ENCODE measurements at regions of chr22 and their contacts with region 1.

Region 1: GRCh38 chr22:31211862-31212730 is at the start of gene LIMK2:
- DNase-seq: peak; percentile 92 to 99 (median 97)
- ATAC-seq: peak; percentile 99
- H3K4me3 ChIP-seq: peak within 1 kb of the TSS; percentile 100
- H3K4me3 Mint-ChIP-seq: peak within 1 kb of the TSS; percentile 94
- H3K27ac ChIP-seq: peak within 1 kb of the TSS; percentile 55 to 72
- H3K27ac Mint-ChIP-seq: peak within 1 kb of the TSS; percentile 75
- H3K4me1 ChIP-seq: peaks cover 45% of the 10 kb centered on the region
- H3K4me1 Mint-ChIP-seq: peaks cover 62% of the 10 kb centered on the region
- H3K27me3 ChIP-seq: no peaks in the 10 kb centered on the region
- H3K27me3 Mint-ChIP-seq: no peaks in the 10 kb centered on the region
- CTCF ChIP-seq: peak; percentile 82
- total RNA-seq, gene LIMK2: 13.1 to 14.6 TPM

Region 2: GRCh38 chr22:31107178-31107893 is 104.8 kb before region 1 on chr22 and contains the start of gene SELENOM:
- CTCF ChIA-PET with region 1: interaction called, 10 read pairs
- POLR2A ChIA-PET with region 1: interaction called, 5 read pairs
- intact Hi-C with region 1: loop called in 1 of 2 experiments (anchors 5 kb)
- DNase-seq: peak; percentile 71 to 95 (median 82)
- ATAC-seq: peak; percentile 90
- H3K4me3 ChIP-seq: peak within 1 kb of the TSS; percentile 75
- H3K4me3 Mint-ChIP-seq: peak within 1 kb of the TSS; percentile 97
- H3K27ac ChIP-seq: peak within 1 kb of the TSS; percentile 24 to 51
- H3K27ac Mint-ChIP-seq: peak within 1 kb of the TSS; percentile 87
- H3K4me1 ChIP-seq: peaks cover 31% of the 10 kb centered on the region
- H3K4me1 Mint-ChIP-seq: peaks cover 24% of the 10 kb centered on the region
- H3K27me3 ChIP-seq: no peaks in the 10 kb centered on the region
- H3K27me3 Mint-ChIP-seq: no peaks in the 10 kb centered on the region
- CTCF ChIP-seq: peak; percentile 70
- total RNA-seq, gene SELENOM: 78.0 to 82.4 TPM

Region 3: GRCh38 chr22:31223786-31224191 is 11.7 kb after region 1 on chr22:
- CTCF ChIA-PET with region 1: interaction called, 34 read pairs
- POLR2A ChIA-PET with region 1: interaction called, 49 read pairs
- intact Hi-C with region 1: no loop called
- DNase-seq: no peak
- ATAC-seq: no peak
- H3K4me3 ChIP-seq: no peak overlapping the region
- H3K4me3 Mint-ChIP-seq: no peak overlapping the region
- H3K27ac ChIP-seq: peak overlapping the region in 1 of 2 donors; percentile 17
- H3K27ac Mint-ChIP-seq: peak overlapping the region; percentile 80
- H3K4me1 ChIP-seq: peaks cover 20% of the 10 kb centered on the region
- H3K4me1 Mint-ChIP-seq: peaks cover 59% of the 10 kb centered on the region
- H3K27me3 ChIP-seq: no peaks in the 10 kb centered on the region
- H3K27me3 Mint-ChIP-seq: no peaks in the 10 kb centered on the region
- CTCF ChIP-seq: no peak

Region 4: GRCh38 chr22:31272522-31273446 is 60.7 kb after region 1 on chr22:
- CTCF ChIA-PET with region 1: interaction called, 20 read pairs
- POLR2A ChIA-PET with region 1: interaction called, 29 read pairs
- intact Hi-C with region 1: loop called (anchors 2 to 5 kb)
- DNase-seq: peak in 9 of 14 experiments; percentile 38 to 79 (median 57)
- ATAC-seq: peak; percentile 70
- H3K4me3 ChIP-seq: no peak overlapping the region
- H3K4me3 Mint-ChIP-seq: peak overlapping the region; percentile 45
- H3K27ac ChIP-seq: peak overlapping the region in 1 of 2 donors; percentile 3
- H3K27ac Mint-ChIP-seq: peak overlapping the region; percentile 88
- H3K4me1 ChIP-seq: peaks cover 62% of the 10 kb centered on the region
- H3K4me1 Mint-ChIP-seq: peaks cover 74% of the 10 kb centered on the region
- H3K27me3 ChIP-seq: no peaks in the 10 kb centered on the region
- H3K27me3 Mint-ChIP-seq: no peaks in the 10 kb centered on the region
- CTCF ChIP-seq: peak; percentile 78

Region 5: GRCh38 chr22:31313366-31314147 is 101.5 kb after region 1 on chr22:
- CTCF ChIA-PET with region 1: interaction called, 12 read pairs
- POLR2A ChIA-PET with region 1: no interaction called
- intact Hi-C with region 1: loop called in 1 of 2 experiments (anchors 1 kb)
- DNase-seq: peak; percentile 41 to 86 (median 64)
- ATAC-seq: peak; percentile 79
- H3K4me3 ChIP-seq: no peak overlapping the region
- H3K4me3 Mint-ChIP-seq: no peak overlapping the region
- H3K27ac ChIP-seq: no peak overlapping the region
- H3K27ac Mint-ChIP-seq: no peak overlapping the region
- H3K4me1 ChIP-seq: peaks cover 15% of the 10 kb centered on the region
- H3K4me1 Mint-ChIP-seq: peaks cover 29% of the 10 kb centered on the region
- H3K27me3 ChIP-seq: no peaks in the 10 kb centered on the region
- H3K27me3 Mint-ChIP-seq: no peaks in the 10 kb centered on the region
- CTCF ChIP-seq: peak; percentile 90